ENCODE measurements at regions of chr1 and their contacts with region 1.

Region 1: GRCh38 chr1:204516180-204516879 is at the start of gene MDM4:
- DNase-seq: peak; percentile 90 to 96
- ATAC-seq: peak; percentile 79 to 95 (median 89)
- H3K4me3 ChIP-seq: peak within 1 kb of the TSS; percentile 76
- H3K4me3 Mint-ChIP-seq: no peak within 1 kb of the TSS
- H3K27ac ChIP-seq: peak within 1 kb of the TSS; percentile 94
- H3K27ac Mint-ChIP-seq: no peak within 1 kb of the TSS
- H3K4me1 ChIP-seq: peaks cover 69% of the 10 kb centered on the region
- H3K4me1 Mint-ChIP-seq: peaks cover 41 to 44% of the 10 kb centered on the region in 2 donors
- H3K27me3 ChIP-seq: no peaks in the 10 kb centered on the region
- H3K27me3 Mint-ChIP-seq: no peaks in the 10 kb centered on the region
- CTCF ChIP-seq: no peak
- total RNA-seq, gene MDM4: 295 to 324 (median 296) TPM

Region 2: DNA sequence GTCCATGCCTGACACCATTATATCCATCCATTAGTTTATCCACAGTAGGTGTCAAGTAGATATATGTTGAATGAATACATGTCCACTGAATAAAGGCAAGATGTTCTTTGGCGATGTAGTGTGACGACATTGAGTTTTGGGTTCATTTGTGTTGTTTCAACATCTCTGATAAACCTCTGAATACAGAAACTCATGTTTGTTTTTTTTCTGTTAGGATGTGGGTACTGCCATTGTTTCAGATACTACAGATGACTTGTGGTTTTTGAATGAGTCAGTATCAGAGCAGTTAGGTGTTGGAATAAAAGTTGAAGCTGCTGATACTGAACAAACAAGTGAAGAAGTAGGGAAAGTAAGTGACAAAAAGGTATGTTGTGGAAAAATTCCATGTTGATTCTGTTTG is 28.0 kb after region 1 on chr1:
- intact Hi-C with region 1: loop called (anchors 1 kb)
- DNase-seq: peak in 1 of 2 donors; percentile 69
- ATAC-seq: peak; percentile 85 to 95 (median 92)
- H3K4me3 ChIP-seq: no peak overlapping the region
- H3K4me3 Mint-ChIP-seq: peak overlapping the region; percentile 45
- H3K27ac ChIP-seq: peak overlapping the region; percentile 84
- H3K27ac Mint-ChIP-seq: peak overlapping the region; percentile 91
- H3K4me1 ChIP-seq: peaks cover 16% of the 10 kb centered on the region
- H3K4me1 Mint-ChIP-seq: peaks cover 37 to 58% of the 10 kb centered on the region in 2 donors
- H3K27me3 ChIP-seq: no peaks in the 10 kb centered on the region
- H3K27me3 Mint-ChIP-seq: no peaks in the 10 kb centered on the region
- CTCF ChIP-seq: no peak